CD4-positive, alpha-beta T cell (primary cell): ENCODE measurements at regions of chr1 and their contacts with region 1.

Region 1: GRCh38 chr1:175124861-175125260 is 57.2 kb downstream of the TNN start:
- DNase-seq: no peak
- ATAC-seq: no peak
- H3K4me3 ChIP-seq: no peak overlapping the region
- H3K4me3 Mint-ChIP-seq: no peak overlapping the region
- H3K27ac ChIP-seq: no peak overlapping the region
- H3K27ac Mint-ChIP-seq: no peak overlapping the region
- H3K4me1 ChIP-seq: peaks cover 2% of the 10 kb centered on the region
- H3K4me1 Mint-ChIP-seq: no peaks in the 10 kb centered on the region
- H3K27me3 ChIP-seq: no peaks in the 10 kb centered on the region
- H3K27me3 Mint-ChIP-seq: no peaks in the 10 kb centered on the region
- CTCF ChIP-seq: no peak

Region 2: GRCh38 chr1:174769961-174770549 is 354.8 kb before region 1 on chr1:
- CTCF ChIA-PET with region 1: interaction called, 3 read pairs
- POLR2A ChIA-PET with region 1: no interaction called
- intact Hi-C with region 1: loop called (anchors 1 to 2 kb)
- DNase-seq: peak in 4 of 14 experiments; percentile 28 to 76 (median 70)
- ATAC-seq: peak; percentile 78
- H3K4me3 ChIP-seq: no peak overlapping the region
- H3K4me3 Mint-ChIP-seq: no peak overlapping the region
- H3K27ac ChIP-seq: no peak overlapping the region
- H3K27ac Mint-ChIP-seq: no peak overlapping the region
- H3K4me1 ChIP-seq: no peaks in the 10 kb centered on the region
- H3K4me1 Mint-ChIP-seq: no peaks in the 10 kb centered on the region
- H3K27me3 ChIP-seq: no peaks in the 10 kb centered on the region
- H3K27me3 Mint-ChIP-seq: no peaks in the 10 kb centered on the region
- CTCF ChIP-seq: peak; percentile 84

Region 3: DNA sequence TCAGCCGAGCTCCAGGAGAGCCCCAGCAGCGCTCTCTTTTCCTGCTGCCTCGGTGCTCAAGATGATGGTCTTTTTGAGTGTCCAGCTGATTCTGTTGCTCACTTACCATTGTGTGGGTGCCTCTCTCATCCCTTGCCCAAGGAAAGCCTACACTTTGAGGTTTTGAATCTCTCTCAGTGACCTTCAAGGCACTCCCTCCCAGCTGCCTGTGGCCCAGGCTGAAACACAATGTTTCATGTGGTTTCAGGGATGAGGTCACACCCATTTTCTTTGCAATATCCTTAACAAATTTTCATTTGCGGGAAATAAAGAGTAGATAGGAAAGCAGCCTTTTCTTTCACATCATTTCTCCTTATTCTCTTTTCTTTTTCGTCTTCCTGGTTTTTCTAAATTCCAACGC is 89.0 kb before region 1 on chr1:
- CTCF ChIA-PET with region 1: interaction called, 26 read pairs
- POLR2A ChIA-PET with region 1: no interaction called
- intact Hi-C with region 1: loop called in 1 of 2 experiments (anchors 1 kb)
- DNase-seq: no peak
- ATAC-seq: no peak
- H3K4me3 ChIP-seq: no peak overlapping the region
- H3K4me3 Mint-ChIP-seq: no peak overlapping the region
- H3K27ac ChIP-seq: no peak overlapping the region
- H3K27ac Mint-ChIP-seq: no peak overlapping the region
- H3K4me1 ChIP-seq: no peaks in the 10 kb centered on the region
- H3K4me1 Mint-ChIP-seq: no peaks in the 10 kb centered on the region
- H3K27me3 ChIP-seq: no peaks in the 10 kb centered on the region
- H3K27me3 Mint-ChIP-seq: no peaks in the 10 kb centered on the region
- CTCF ChIP-seq: no peak